HEK293 (cell line): ENCODE measurements at regions of chr17 and their contacts with region 1.

Region 1: DNA sequence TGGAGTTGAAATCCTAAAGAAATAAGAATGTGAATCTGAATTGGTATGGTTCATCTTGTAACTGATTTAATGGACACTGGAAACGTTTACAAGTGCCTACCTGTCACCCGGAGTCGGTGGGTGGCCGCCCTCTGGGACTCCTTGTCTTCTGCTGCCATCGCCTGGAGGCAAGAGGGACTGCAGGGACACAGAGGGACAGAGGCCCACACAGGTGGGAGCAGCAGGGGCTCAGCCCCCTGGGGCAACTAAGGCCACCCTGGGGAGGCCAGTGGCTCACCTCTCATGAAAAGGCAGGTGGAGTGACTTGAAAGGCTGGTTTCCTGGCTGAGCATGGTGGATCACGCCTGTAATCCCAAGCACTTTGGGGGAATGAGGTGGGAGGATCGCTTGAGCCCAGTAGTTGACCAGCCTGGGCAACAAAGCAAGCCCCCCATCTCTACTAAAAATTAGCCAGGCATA is 23.2 kb downstream of the TMEM92 start:
- H3K4me3 ChIP-seq: no peak overlapping the region
- H3K27ac ChIP-seq: no peak overlapping the region
- H3K4me1 ChIP-seq: no peaks in the 10 kb centered on the region
- CTCF ChIP-seq: peak; percentile 92

Region 2: DNA sequence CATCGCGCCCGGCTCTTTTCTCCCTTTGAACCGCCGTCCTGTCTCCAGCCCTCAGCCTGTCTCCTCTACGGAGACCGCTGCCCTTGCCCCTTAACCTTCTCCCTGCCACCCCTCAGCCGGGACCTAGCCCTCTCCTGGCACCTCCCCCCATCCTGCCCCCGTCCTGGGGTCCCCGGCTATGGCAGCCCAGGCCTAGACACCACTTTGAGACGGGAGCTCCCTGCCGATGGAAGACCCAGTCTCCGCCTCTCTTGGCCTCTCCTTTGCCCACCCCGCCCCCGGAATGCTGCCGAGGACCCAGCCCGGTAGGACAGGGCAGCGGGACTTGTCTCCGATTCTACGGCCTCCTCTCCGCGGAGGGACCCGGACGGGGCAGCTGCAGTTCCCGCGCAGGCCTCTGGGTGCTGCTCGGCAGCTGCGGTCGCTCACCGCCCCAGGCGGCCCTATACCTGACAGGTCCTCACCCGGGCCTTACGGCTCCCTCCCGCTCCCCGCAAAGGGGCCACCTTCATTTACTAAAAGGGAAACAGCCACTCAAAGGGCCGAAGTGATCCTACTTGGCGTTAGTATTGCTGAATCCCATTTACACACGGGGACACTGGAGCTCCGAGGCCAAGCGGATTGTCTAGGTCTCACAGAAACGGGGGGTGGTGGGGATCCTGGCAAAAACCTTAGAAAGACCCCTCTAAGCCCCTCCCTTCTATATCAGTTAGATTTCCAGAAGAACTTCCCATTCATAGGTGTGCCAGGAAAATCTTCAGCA is 417.0 kb before region 1 on chr17:
- CTCF ChIA-PET with region 1: no interaction called
- POLR2A ChIA-PET with region 1: no interaction called
- H3K4me3 ChIP-seq: peak overlapping the region; percentile 21
- H3K27ac ChIP-seq: no peak overlapping the region
- H3K4me1 ChIP-seq: peaks cover 5% of the 10 kb centered on the region; the same call in 1 of the 2 replicates
- CTCF ChIP-seq: peak; percentile 76

Region 3: GRCh38 chr17:50123649-50124349 is 173.6 kb before region 1 on chr17:
- CTCF ChIA-PET with region 1: interaction called, 17 read pairs
- POLR2A ChIA-PET with region 1: no interaction called
- H3K4me3 ChIP-seq: no peak overlapping the region
- H3K27ac ChIP-seq: peak overlapping the region; percentile 60
- H3K4me1 ChIP-seq: peaks cover 13% of the 10 kb centered on the region
- CTCF ChIP-seq: no peak

Region 4: GRCh38 chr17:50169121-50169764 is 128.2 kb before region 1 on chr17:
- CTCF ChIA-PET with region 1: interaction called, 106 read pairs
- POLR2A ChIA-PET with region 1: no interaction called
- H3K4me3 ChIP-seq: no peak overlapping the region
- H3K27ac ChIP-seq: no peak overlapping the region
- H3K4me1 ChIP-seq: no peaks in the 10 kb centered on the region
- CTCF ChIP-seq: peak; percentile 98

Region 5: DNA sequence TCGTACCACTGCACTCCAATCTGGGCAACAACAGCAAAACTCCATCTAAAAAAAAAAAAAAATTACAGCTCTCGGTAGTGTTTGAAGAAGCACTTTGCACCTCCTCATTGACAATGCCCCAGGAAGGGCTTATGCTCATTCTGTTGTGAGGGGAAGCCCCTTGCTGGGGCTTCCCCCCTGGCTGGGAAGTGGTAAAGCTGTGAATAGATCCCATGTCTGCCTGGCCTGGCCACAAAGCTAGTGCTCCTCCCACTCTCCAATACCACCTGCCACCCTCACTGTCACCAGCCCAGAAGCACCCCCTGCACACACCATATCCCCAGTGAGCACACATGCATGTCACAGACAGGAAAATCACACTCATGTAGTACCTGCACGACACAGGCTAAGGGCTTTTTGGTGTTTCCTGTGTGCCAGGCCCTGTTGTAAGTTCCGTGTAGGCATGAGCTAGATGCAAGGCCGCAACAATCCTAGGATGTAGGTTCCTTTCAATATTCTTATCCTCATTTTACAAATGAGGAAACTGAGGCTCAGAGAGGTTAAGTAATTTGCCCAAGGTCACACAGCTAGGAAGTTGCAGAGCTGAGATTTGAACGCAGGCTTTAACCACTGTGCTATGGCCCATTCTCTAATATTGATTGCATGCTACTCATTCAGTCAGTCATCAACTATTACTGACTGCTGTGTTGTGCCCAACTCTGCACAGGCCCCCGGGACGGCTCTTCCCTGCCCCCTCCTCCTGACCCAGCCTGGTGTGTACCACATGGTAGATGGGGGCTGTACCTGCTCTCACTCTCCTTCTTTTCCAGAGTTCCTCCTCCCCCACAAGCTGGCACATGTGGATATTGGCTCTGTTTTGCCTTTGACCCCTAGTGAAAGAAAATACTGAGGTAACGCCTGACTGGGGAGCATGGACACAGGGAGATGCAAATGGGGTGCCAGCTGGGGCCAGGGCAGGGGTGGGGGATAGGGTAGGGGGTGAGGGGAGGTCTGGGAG is 84.1 kb before region 1 on chr17:
- CTCF ChIA-PET with region 1: interaction called, 308 read pairs
- POLR2A ChIA-PET with region 1: no interaction called
- H3K4me3 ChIP-seq: no peak overlapping the region
- H3K27ac ChIP-seq: no peak overlapping the region
- H3K4me1 ChIP-seq: peaks cover 6% of the 10 kb centered on the region; the same call in 1 of the 2 replicates
- CTCF ChIP-seq: peak; percentile 44; the same call in 1 of the 2 replicates

Region 6: GRCh38 chr17:50283246-50283645 is 14.2 kb before region 1 on chr17:
- CTCF ChIA-PET with region 1: interaction called, 263 read pairs
- POLR2A ChIA-PET with region 1: no interaction called
- H3K4me3 ChIP-seq: no peak overlapping the region
- H3K27ac ChIP-seq: no peak overlapping the region
- H3K4me1 ChIP-seq: peaks cover 5% of the 10 kb centered on the region; the same call in 1 of the 2 replicates
- CTCF ChIP-seq: no peak